ENCODE measurements at regions of chr14 and their contacts with region 1.

Region 1: GRCh38 chr14:70809543-70810244 is 381 bp upstream of the MAP3K9 start:
- DNase-seq: peak; percentile 97
- ATAC-seq: peak; percentile 93 to 95
- H3K4me3 ChIP-seq: peak overlapping the region; percentile 72
- H3K27ac ChIP-seq: peak overlapping the region; percentile 81 to 91
- H3K4me1 ChIP-seq: peaks cover 28% of the 10 kb centered on the region
- CTCF ChIP-seq: no peak
- EP300 ChIP-seq: no peak
- POLR2A ChIP-seq: peak; percentile 42
- RAD21 ChIP-seq: no peak

Region 2: GRCh38 chr14:70754989-70755388 is 54.7 kb before region 1 on chr14:
- CTCF ChIA-PET with region 1: no interaction called
- POLR2A ChIA-PET with region 1: interaction called, 18 read pairs
- DNase-seq: peak in 1 of 2 experiments; percentile 82
- ATAC-seq: peak; percentile 77 to 83
- H3K4me3 ChIP-seq: no peak overlapping the region
- H3K27ac ChIP-seq: peak overlapping the region; percentile 86 to 87
- H3K4me1 ChIP-seq: peaks cover 46% of the 10 kb centered on the region
- CTCF ChIP-seq: no peak
- EP300 ChIP-seq: peak; percentile 51 to 64; a peak in 2 of 5 replicates
- POLR2A ChIP-seq: no peak
- RAD21 ChIP-seq: peak in 1 of 2 experiments; percentile 32; a peak in 1 of 5 replicates

Region 3: GRCh38 chr14:70789361-70789760 is 20.3 kb before region 1 on chr14:
- CTCF ChIA-PET with region 1: no interaction called
- POLR2A ChIA-PET with region 1: no interaction called
- DNase-seq: no peak
- ATAC-seq: no peak
- H3K4me3 ChIP-seq: no peak overlapping the region
- H3K27ac ChIP-seq: no peak overlapping the region
- H3K4me1 ChIP-seq: peaks cover 12% of the 10 kb centered on the region; the same call in 1 of the 3 replicates
- CTCF ChIP-seq: no peak
- EP300 ChIP-seq: no peak
- POLR2A ChIP-seq: no peak
- RAD21 ChIP-seq: no peak

Region 4: DNA sequence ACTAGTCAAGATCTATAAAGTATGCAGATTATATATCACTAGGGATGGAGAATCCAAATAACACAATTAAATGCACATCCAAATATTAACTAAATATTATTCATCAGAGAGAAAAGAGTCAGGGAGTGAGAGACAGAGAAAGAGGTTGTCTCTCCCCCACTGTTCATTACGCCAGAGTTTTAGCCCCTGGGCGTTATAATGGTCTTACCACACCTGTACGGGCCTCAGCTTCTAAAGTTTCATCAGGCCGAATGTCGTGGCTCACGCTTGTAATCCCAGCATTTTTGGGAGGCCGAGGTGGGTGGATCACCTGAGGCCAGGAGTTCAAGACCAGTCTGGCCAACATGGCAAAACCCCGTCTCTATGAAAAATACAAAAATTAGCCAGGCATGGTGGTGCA is 19.5 kb after region 1 on chr14:
- CTCF ChIA-PET with region 1: no interaction called
- POLR2A ChIA-PET with region 1: no interaction called
- DNase-seq: no peak
- ATAC-seq: no peak
- H3K4me3 ChIP-seq: no peak overlapping the region
- H3K27ac ChIP-seq: no peak overlapping the region
- H3K4me1 ChIP-seq: no peaks in the 10 kb centered on the region
- CTCF ChIP-seq: no peak
- EP300 ChIP-seq: no peak
- POLR2A ChIP-seq: no peak
- RAD21 ChIP-seq: no peak

Measured in A549 (cell line).